Heart right ventricle (tissue), 16 donors: ENCODE measurements at regions of chr3 and their contacts with region 1.

Region 1: GRCh38 chr3:116757315-116757714 is 47.7 kb downstream of the TUSC7 start:
- DNase-seq: no peak
- ATAC-seq: no peak
- H3K4me3 ChIP-seq: no peak overlapping the region
- H3K27ac ChIP-seq: no peak overlapping the region
- H3K4me1 ChIP-seq: no peaks in the 10 kb centered on the region
- H3K27me3 ChIP-seq: peaks cover 0 to 28% (median 6%) of the 10 kb centered on the region in 7 donors
- CTCF ChIP-seq: no peak

Region 2: GRCh38 chr3:115819785-115820384 is 937.4 kb before region 1 on chr3:
- intact Hi-C with region 1: loop called in 1 of 10 experiments (anchors 10 kb)
- DNase-seq: peak in 1 of 2 donors; percentile 77
- ATAC-seq: peak; percentile 70 to 84 (median 75)
- H3K4me3 ChIP-seq: no peak overlapping the region
- H3K27ac ChIP-seq: no peak overlapping the region
- H3K4me1 ChIP-seq: no peaks in the 10 kb centered on the region
- H3K27me3 ChIP-seq: no peaks in the 10 kb centered on the region
- CTCF ChIP-seq: peak; percentile 79 to 100 (median 94)

Region 3: GRCh38 chr3:116140100-116140689 is 617.1 kb before region 1 on chr3:
- intact Hi-C with region 1: loop called in 4 of 10 experiments (anchors 2 to 10 kb)
- DNase-seq: no peak
- ATAC-seq: no peak
- H3K4me3 ChIP-seq: no peak overlapping the region
- H3K27ac ChIP-seq: no peak overlapping the region
- H3K4me1 ChIP-seq: peaks cover 0 to 7% (median 0%) of the 10 kb centered on the region in 9 donors
- H3K27me3 ChIP-seq: no peaks in the 10 kb centered on the region
- CTCF ChIP-seq: peak; percentile 42 to 72 (median 68)

Region 4: GRCh38 chr3:116153174-116153573 is 604.1 kb before region 1 on chr3:
- intact Hi-C with region 1: loop called in 1 of 10 experiments (anchors 5 kb)
- DNase-seq: no peak
- ATAC-seq: no peak
- H3K4me3 ChIP-seq: peak overlapping the region in 1 of 10 donors; percentile 26
- H3K27ac ChIP-seq: no peak overlapping the region
- H3K4me1 ChIP-seq: no peaks in the 10 kb centered on the region
- H3K27me3 ChIP-seq: no peaks in the 10 kb centered on the region
- CTCF ChIP-seq: no peak

Region 5: GRCh38 chr3:116614795-116615362 is 142.4 kb before region 1 on chr3:
- intact Hi-C with region 1: loop called in 1 of 10 experiments (anchors 10 kb)
- DNase-seq: no peak
- ATAC-seq: no peak
- H3K4me3 ChIP-seq: no peak overlapping the region
- H3K27ac ChIP-seq: no peak overlapping the region
- H3K4me1 ChIP-seq: no peaks in the 10 kb centered on the region
- H3K27me3 ChIP-seq: peaks cover 0 to 8% (median 0%) of the 10 kb centered on the region in 7 donors
- CTCF ChIP-seq: peak in 6 of 9 donors; percentile 12 to 29 (median 24)